ENCODE measurements at regions of chr10 and their contacts with region 1.

Region 1: DNA sequence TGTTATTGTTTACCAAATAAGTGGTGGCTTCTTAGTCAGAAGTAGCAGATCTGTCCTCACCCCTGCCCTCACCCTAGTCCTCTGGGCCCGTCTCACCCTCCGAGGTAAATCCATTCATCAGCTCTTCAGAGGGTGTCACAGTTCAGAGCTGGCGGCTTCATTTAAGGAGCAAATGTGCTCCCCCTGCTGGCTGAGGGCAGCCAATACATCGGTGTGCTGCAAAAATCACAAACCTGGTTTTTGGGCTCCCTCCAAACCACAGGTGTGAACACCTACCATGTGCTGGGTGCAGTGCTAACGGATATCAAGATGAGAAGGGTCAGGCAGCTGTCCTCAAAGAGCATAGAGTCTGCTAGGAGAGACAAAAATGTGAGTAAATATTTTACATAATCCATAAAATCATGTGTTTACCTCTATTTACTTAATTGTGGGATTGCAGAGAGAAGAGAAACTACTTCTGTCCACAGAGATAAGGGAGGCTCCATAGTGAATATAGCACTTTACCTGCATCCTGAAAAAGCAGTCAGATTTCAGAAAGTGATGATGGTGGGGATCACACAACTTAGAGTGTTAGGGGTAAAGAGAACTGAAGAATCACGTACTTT is 15.5 kb upstream of the CRTAC1 start:
- DNase-seq: peak in 1 of 2 donors; percentile 34
- ATAC-seq: peak; percentile 57 to 74
- H3K4me3 ChIP-seq: no peak overlapping the region
- H3K27ac ChIP-seq: no peak overlapping the region
- H3K4me1 ChIP-seq: no peaks in the 10 kb centered on the region
- H3K27me3 ChIP-seq: peaks cover 0 to 13% (median 0%) of the 10 kb centered on the region in 3 donors
- CTCF ChIP-seq: peak; percentile 48 to 87 (median 72)
- POLR2A ChIP-seq: no peak

Region 2: DNA sequence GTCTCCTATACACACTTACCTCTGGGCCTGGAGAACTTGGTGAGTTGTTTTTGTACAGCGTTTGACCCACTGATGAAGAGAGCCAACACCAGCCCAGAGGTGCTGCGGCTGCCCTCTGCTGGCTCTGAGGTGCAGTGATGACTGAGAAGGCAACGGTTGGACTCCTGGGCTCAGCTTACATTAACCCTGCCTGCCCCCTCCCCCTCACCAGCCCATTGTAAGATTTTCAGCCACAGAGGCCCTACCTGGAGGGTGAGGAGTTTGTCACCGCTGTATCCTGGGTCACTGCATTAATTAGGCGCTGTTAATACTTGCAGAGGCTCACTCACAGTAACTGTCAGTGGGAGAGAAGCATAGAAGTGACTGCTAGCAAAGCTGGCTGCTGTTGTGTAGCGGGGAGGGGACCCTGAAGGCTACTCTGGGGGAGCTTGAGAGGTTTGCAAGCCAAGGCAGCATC is 492.3 kb before region 1 on chr10:
- in situ Hi-C with region 1: no loop called
- intact Hi-C with region 1: no loop called
- DNase-seq: peak; percentile 60 to 79
- ATAC-seq: peak; percentile 90 to 94
- H3K4me3 ChIP-seq: no peak overlapping the region
- H3K27ac ChIP-seq: peak overlapping the region in 3 of 4 donors; percentile 30 to 42 (median 35)
- H3K4me1 ChIP-seq: peaks cover 32 to 40% of the 10 kb centered on the region in 2 donors
- H3K27me3 ChIP-seq: no peaks in the 10 kb centered on the region
- CTCF ChIP-seq: peak; percentile 65 to 86 (median 82)
- POLR2A ChIP-seq: no peak

Region 3: GRCh38 chr10:97759158-97759887 is 286.6 kb before region 1 on chr10:
- in situ Hi-C with region 1: loop called in 1 of 4 experiments (anchors 25 kb)
- intact Hi-C with region 1: no loop called
- DNase-seq: peak in 1 of 2 donors; percentile 32
- ATAC-seq: peak; percentile 72 to 77
- H3K4me3 ChIP-seq: no peak overlapping the region
- H3K27ac ChIP-seq: no peak overlapping the region
- H3K4me1 ChIP-seq: peaks cover 0 to 13% of the 10 kb centered on the region in 2 donors
- H3K27me3 ChIP-seq: no peaks in the 10 kb centered on the region
- CTCF ChIP-seq: peak; percentile 40 to 83 (median 76)
- POLR2A ChIP-seq: no peak

Region 4: GRCh38 chr10:97914837-97915211 is 131.1 kb before region 1 on chr10:
- in situ Hi-C with region 1: loop called (anchors 5 to 10 kb)
- intact Hi-C with region 1: loop called (anchors 1 kb)
- DNase-seq: peak; percentile 46 to 59
- ATAC-seq: peak; percentile 65 to 91
- H3K4me3 ChIP-seq: peak overlapping the region in 2 of 4 donors; percentile 22 to 24
- H3K27ac ChIP-seq: no peak overlapping the region
- H3K4me1 ChIP-seq: peaks cover 8% of the 10 kb centered on the region in 2 donors
- H3K27me3 ChIP-seq: no peaks in the 10 kb centered on the region
- CTCF ChIP-seq: peak; percentile 77 to 93 (median 87)
- POLR2A ChIP-seq: no peak